GM12878 (cell line): ENCODE measurements at regions of chr3 and their contacts with region 1.

Region 1: DNA sequence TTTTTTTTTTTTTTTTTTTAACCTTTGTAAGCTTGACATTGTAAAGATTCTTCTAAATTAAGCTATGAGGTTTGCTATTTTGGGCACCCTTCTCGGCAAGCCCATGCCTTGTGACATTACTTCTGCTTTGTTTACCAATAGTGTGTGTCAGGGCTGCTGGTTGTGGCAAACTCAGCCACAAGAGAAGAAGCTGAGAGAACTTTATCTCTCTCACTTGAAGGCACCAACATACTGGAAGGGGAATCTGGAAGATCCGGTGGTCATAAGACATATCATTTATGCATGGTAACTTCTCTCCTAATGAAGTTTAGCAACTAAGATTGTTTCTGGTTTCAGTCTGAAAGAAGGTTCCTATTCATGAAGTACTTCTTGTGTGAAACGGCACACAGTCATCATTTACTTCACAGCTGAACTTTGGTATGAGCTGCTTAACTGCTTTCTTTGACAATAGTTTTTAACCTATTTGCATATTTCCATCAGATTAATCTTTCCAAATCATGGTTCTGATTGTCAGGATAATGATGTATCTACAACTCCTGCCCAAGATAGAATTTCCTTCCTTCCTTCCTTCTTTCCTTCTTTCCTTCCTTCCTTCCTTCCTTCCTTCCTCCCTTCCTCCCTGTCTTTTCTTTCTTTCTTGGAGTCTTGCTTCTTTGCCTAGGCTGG is 189.3 kb downstream of the NFKBIZ start:
- DNase-seq: peak; percentile 94
- ATAC-seq: peak; percentile 88
- H3K4me3 ChIP-seq: no peak overlapping the region
- H3K27ac ChIP-seq: peak overlapping the region; percentile 74
- H3K4me1 ChIP-seq: peaks cover 51% of the 10 kb centered on the region
- H3K27me3 ChIP-seq: no peaks in the 10 kb centered on the region
- CTCF ChIP-seq: no peak
- EP300 ChIP-seq: peak; percentile 87 to 94
- POLR2A ChIP-seq: no peak
- RAD21 ChIP-seq: no peak

Region 2: DNA sequence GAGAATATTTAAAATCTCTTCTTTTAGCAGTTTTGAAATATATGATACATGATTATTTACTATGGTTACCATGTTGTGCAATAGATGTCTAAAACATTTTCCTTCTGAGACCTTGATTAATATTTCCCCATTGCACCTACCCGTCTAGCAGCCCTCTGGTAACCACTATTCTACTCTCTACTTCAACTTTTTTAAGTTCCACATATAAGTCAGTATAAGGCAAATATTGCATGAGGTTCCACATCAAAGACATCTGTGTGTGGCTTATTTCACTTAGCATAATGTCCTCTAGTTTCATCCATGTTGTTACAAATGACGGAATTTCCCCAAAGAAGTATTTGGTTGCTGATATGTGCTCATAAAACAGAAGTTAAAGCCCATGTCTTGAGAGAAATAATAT is 218.9 kb before region 1 on chr3:
- CTCF ChIA-PET with region 1: interaction called, 14 read pairs
- POLR2A ChIA-PET with region 1: no interaction called
- RAD21 ChIA-PET with region 1: interaction called, 17 read pairs
- SMC1A ChIA-PET with region 1: interaction called, 15 read pairs
- in situ Hi-C with region 1: no loop called
- intact Hi-C with region 1: loop called (anchors 5 kb)
- DNase-seq: no peak
- ATAC-seq: peak; percentile 93
- H3K4me3 ChIP-seq: no peak overlapping the region
- H3K27ac ChIP-seq: no peak overlapping the region
- H3K4me1 ChIP-seq: peaks cover 24% of the 10 kb centered on the region
- H3K27me3 ChIP-seq: no peaks in the 10 kb centered on the region
- CTCF ChIP-seq: no peak
- EP300 ChIP-seq: peak in 1 of 2 experiments; percentile 47; a peak in 1 of 4 replicates
- POLR2A ChIP-seq: no peak
- RAD21 ChIP-seq: no peak

Region 3: DNA sequence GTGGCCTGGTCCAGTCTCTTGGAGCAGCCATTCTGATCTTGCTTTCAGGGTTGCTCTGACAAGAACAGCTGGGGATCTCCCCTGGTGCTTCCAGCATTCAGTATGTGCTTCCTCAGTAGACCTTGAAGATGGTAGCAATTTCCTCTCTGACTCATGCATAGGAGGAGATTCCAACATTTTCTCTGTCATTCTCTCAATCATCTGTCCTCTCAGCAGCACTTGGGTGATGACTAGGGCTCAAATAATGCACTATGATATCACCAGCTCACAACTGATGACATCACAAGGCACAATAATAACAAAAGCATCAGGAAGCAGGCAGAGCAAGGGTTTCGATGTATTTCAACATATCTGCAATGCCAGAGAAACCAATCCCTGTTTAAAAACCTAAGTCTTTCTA is 136.6 kb before region 1 on chr3:
- CTCF ChIA-PET with region 1: interaction called, 3 read pairs
- POLR2A ChIA-PET with region 1: interaction called, 5 read pairs
- RAD21 ChIA-PET with region 1: interaction called, 16 read pairs
- SMC1A ChIA-PET with region 1: interaction called, 21 read pairs
- in situ Hi-C with region 1: no loop called
- intact Hi-C with region 1: loop called (anchors 1 kb)
- DNase-seq: no peak
- ATAC-seq: peak; percentile 42
- H3K4me3 ChIP-seq: no peak overlapping the region
- H3K27ac ChIP-seq: no peak overlapping the region
- H3K4me1 ChIP-seq: peaks cover 26% of the 10 kb centered on the region
- H3K27me3 ChIP-seq: no peaks in the 10 kb centered on the region
- CTCF ChIP-seq: no peak
- EP300 ChIP-seq: no peak
- POLR2A ChIP-seq: no peak
- RAD21 ChIP-seq: no peak

Region 4: DNA sequence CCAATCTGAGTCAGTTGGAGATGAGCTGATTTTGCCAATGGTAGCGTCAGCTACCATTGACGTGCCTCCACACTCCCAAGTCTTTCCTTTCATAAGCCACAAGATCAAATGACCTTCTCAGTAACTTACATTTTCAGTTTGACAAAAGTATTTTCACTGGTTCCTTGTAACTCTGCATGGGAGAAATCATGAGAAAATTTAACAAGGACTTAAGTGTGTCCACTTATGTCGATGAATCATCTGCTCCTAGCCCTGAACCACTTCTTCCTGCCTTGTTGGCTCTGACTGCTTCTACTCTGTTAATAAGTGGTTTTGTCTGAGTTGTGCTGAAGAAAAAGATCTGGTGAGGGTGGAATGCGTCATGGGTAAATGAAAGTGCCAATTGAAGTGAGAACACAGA is 88.1 kb before region 1 on chr3:
- CTCF ChIA-PET with region 1: no interaction called
- POLR2A ChIA-PET with region 1: no interaction called
- RAD21 ChIA-PET with region 1: interaction called, 18 read pairs
- SMC1A ChIA-PET with region 1: interaction called, 20 read pairs
- in situ Hi-C with region 1: no loop called
- intact Hi-C with region 1: no loop called
- DNase-seq: peak; percentile 87
- ATAC-seq: peak; percentile 92
- H3K4me3 ChIP-seq: no peak overlapping the region
- H3K27ac ChIP-seq: no peak overlapping the region
- H3K4me1 ChIP-seq: no peaks in the 10 kb centered on the region
- H3K27me3 ChIP-seq: no peaks in the 10 kb centered on the region
- CTCF ChIP-seq: no peak
- EP300 ChIP-seq: peak in 1 of 2 experiments; percentile 49; a peak in 1 of 4 replicates
- POLR2A ChIP-seq: no peak
- RAD21 ChIP-seq: no peak

Region 5: DNA sequence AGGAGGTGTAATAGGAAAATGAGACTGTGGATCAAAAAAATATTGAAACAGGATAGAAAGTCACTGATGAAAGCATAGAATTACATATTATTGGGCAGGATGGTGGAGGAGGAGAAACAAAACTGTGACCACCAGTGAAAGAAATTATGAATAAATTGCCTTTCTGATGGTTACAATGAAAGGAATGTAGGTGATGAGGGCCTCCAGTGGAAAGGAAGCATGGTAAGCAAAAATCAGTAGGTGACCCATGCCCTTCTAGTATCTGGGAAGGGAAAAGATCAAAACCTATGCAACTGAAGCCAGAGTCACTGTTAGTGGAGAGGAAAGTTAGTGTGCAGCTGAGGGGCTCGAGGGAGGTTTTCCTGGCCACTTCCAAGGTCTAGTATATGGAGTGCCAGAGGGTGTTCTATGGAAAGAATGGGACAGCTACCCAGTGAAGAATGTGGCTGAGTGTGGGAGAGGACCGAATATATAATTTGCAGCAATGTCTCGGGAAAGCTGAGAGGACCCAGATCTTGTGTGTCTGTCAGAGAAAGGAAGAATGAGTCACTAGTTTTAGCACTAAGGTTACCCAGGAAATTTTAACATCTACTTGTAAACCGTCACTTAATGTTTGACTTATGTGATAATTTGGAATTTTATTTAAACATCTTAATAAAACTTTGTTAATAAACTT is 43.1 kb before region 1 on chr3:
- CTCF ChIA-PET with region 1: interaction called, 9 read pairs
- POLR2A ChIA-PET with region 1: interaction called, 6 read pairs
- RAD21 ChIA-PET with region 1: interaction called, 49 read pairs
- SMC1A ChIA-PET with region 1: interaction called, 56 read pairs
- in situ Hi-C with region 1: no loop called
- intact Hi-C with region 1: no loop called
- DNase-seq: no peak
- ATAC-seq: peak; percentile 26; the same call in 1 of the 3 replicates
- H3K4me3 ChIP-seq: no peak overlapping the region
- H3K27ac ChIP-seq: peak overlapping the region; percentile 22; the same call in 1 of the 2 replicates
- H3K4me1 ChIP-seq: peaks cover 29% of the 10 kb centered on the region
- H3K27me3 ChIP-seq: no peaks in the 10 kb centered on the region
- CTCF ChIP-seq: no peak
- EP300 ChIP-seq: no peak
- POLR2A ChIP-seq: no peak
- RAD21 ChIP-seq: no peak

Region 6: GRCh38 chr3:102057781-102058421 is 19.3 kb after region 1 on chr3:
- CTCF ChIA-PET with region 1: interaction called, 25 read pairs
- POLR2A ChIA-PET with region 1: interaction called, 37 read pairs
- RAD21 ChIA-PET with region 1: interaction called, 148 read pairs
- SMC1A ChIA-PET with region 1: interaction called, 145 read pairs
- in situ Hi-C with region 1: no loop called
- intact Hi-C with region 1: loop called (anchors 1 kb)
- DNase-seq: peak; percentile 85
- ATAC-seq: peak; percentile 79
- H3K4me3 ChIP-seq: no peak overlapping the region
- H3K27ac ChIP-seq: peak overlapping the region; percentile 65
- H3K4me1 ChIP-seq: peaks cover 37% of the 10 kb centered on the region
- H3K27me3 ChIP-seq: no peaks in the 10 kb centered on the region
- CTCF ChIP-seq: no peak
- EP300 ChIP-seq: peak; percentile 76 to 79; a peak in 3 of 4 replicates
- POLR2A ChIP-seq: no peak
- RAD21 ChIP-seq: no peak